ENCODE measurements at regions of chr19 and their contacts with region 1.

Region 1: GRCh38 chr19:48795055-48795684 is 15.7 kb downstream of the BCAT2 start:
- DNase-seq: peak; percentile 67
- H3K4me3 ChIP-seq: peak overlapping the region; percentile 20
- H3K27me3 ChIP-seq: no peaks in the 10 kb centered on the region
- CTCF ChIP-seq: peak; percentile 94

Region 2: DNA sequence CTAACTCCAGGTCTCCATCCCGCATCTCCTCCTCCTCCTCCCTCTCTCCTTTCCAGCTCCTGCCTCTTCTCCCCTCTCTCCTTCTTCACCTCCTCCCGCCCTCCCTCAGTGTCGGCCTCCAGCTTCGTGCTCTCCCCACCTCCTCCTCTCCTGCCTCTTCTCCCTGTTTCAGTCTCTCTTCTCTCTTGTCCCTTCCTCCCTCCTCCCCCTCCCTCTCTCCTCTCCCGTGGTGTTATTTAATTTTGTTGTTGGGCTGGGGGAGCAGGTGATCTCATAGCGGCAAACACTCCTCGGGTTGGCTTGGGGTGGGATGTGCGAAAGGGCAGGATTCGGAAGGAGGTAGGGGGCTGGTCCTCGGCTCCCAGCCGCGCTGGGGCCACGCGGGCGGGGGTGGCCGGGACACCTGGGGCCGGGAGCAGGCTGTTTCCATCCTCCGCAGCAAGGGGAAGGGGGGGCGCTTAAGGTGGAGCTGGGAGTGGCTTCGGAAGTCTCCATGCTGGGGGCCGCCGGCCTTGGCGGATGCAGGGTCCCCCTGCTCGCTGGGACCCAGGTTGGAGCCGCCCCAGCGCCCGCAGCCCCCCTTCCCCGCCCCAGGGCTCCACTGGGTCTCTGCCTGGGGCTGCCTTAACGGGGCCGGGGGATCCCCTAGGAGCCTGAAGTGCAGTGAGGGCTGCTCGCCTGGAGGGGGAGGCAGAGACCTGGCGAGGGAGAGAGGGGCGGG is 149.0 kb before region 1 on chr19 and contains the start of gene CA11:
- CTCF ChIA-PET with region 1: interaction called, 20 read pairs
- POLR2A ChIA-PET with region 1: interaction called, 3 read pairs
- DNase-seq: no peak
- H3K4me3 ChIP-seq: peak within 1 kb of the TSS; percentile 47
- H3K27me3 ChIP-seq: no peaks in the 10 kb centered on the region
- CTCF ChIP-seq: peak; percentile 94
- polyA plus RNA-seq, gene CA11: 3.0 and 3.2 TPM in 2 replicates

Region 3: GRCh38 chr19:48806518-48806817 is 11.3 kb after region 1 on chr19:
- CTCF ChIA-PET with region 1: interaction called, 24 read pairs
- POLR2A ChIA-PET with region 1: no interaction called
- DNase-seq: no peak
- H3K4me3 ChIP-seq: no peak overlapping the region
- H3K27me3 ChIP-seq: no peaks in the 10 kb centered on the region
- CTCF ChIP-seq: no peak

Region 4: GRCh38 chr19:48826606-48827020 is 31.4 kb after region 1 on chr19:
- CTCF ChIA-PET with region 1: interaction called, 43 read pairs
- POLR2A ChIA-PET with region 1: no interaction called
- DNase-seq: no peak
- H3K4me3 ChIP-seq: no peak overlapping the region
- H3K27me3 ChIP-seq: no peaks in the 10 kb centered on the region
- CTCF ChIP-seq: no peak

Region 5: GRCh38 chr19:48881741-48882657 is 86.8 kb after region 1 on chr19:
- CTCF ChIA-PET with region 1: no interaction called
- POLR2A ChIA-PET with region 1: no interaction called
- DNase-seq: no peak
- H3K4me3 ChIP-seq: no peak overlapping the region
- H3K27me3 ChIP-seq: no peaks in the 10 kb centered on the region
- CTCF ChIP-seq: no peak

Region 6: GRCh38 chr19:48970923-48971395 is 175.8 kb after region 1 on chr19:
- CTCF ChIA-PET with region 1: interaction called, 20 read pairs
- POLR2A ChIA-PET with region 1: interaction called, 8 read pairs
- DNase-seq: no peak
- H3K4me3 ChIP-seq: no peak overlapping the region
- H3K27me3 ChIP-seq: no peaks in the 10 kb centered on the region
- CTCF ChIP-seq: peak; percentile 94